Heart left ventricle (tissue), 16 donors: ENCODE measurements at regions of chr6 and their contacts with region 1.

Region 1: DNA sequence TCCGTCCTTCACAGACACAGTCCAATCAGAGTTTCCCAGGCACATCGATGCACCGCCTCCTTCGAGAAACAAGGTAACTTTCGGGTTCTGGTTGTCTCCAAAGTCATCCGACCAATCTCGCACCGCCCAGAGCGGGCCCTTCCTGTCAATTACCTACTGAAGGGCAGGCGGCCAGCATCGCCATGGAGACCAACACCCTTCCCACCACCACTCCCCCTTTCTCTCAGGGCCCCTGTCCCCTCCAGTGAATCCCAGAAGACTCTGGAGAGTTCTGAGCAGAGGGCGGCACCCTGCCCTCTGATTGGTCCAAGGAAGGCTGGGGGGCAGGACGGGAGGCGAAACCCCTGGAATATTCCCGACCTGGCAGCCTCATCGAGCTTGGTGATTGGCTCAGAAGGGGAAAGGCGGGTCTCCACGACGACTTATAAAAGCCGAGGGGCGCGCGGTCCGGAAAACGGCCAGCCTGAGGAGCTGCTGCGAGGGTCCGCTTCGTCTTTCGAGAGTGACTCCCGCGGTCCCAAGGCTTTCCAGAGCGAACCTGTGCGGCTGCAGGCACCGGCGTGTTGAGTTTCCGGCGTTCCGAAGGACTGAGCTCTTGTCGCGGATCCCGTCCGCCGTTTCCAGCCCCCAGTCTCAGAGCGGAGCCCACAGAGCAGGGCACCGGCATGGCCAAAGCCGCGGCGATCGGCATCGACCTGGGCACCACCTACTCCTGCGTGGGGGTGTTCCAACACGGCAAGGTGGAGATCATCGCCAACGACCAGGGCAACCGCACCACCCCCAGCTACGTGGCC is at the start of gene HSPA1B:
- DNase-seq: peak; percentile 98 to 100 (median 99)
- ATAC-seq: peak; percentile 94 to 97 (median 96)
- H3K4me3 ChIP-seq: peak within 1 kb of the TSS; percentile 41 to 82 (median 73)
- H3K27ac ChIP-seq: peak within 1 kb of the TSS; percentile 89 to 98 (median 96)
- H3K4me1 ChIP-seq: peaks cover 0 to 52% (median 30%) of the 10 kb centered on the region in 12 donors
- H3K27me3 ChIP-seq: no peaks in the 10 kb centered on the region
- CTCF ChIP-seq: no peak
- POLR2A ChIP-seq: peak; percentile 100
- total RNA-seq, gene HSPA1B: 120 to 306 (median 146) TPM

Region 2: DNA sequence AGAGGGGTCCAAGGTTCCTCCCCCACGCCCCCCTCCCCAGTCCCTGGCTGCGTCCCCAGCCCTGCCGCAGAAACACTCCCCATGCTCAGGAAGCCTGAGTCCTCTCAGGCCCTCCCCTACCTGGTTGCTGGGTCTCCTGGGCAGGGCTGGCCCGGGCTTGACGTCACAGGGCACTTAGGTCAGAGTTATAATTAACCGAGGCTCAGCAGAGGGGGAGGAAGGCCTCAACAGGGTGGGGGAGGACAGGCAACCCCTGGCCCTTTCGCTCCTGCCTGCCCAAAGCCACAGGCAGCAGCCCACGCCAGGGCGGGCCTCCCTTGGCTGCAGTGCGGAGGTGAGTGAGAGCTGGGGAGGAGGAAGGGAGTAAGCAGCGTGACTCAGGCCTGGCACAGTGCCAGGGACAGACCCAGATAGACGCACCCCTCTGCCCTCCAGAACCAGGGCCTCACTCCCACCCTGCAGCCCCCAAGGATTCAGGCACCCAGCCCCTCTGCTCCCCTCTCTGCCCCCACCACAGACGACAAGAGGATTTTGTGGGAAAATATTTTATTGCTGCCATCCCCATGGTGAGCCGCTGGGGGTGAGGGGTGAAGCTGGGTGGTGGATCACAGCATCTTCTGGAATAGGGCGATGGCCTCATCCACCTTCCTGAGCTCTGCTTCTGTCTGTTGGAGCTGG is 50.4 kb before region 1 on chr6 and contains the start of gene VWA7:
- intact Hi-C with region 1: loop called in 8 of 10 experiments (anchors 2 to 10 kb)
- DNase-seq: peak; percentile 73 to 90 (median 78)
- ATAC-seq: peak; percentile 85 to 93 (median 88)
- H3K4me3 ChIP-seq: peak within 1 kb of the TSS in 10 of 12 donors; percentile 13 to 49 (median 38)
- H3K27ac ChIP-seq: peak within 1 kb of the TSS in 11 of 12 donors; percentile 38 to 85 (median 79)
- H3K4me1 ChIP-seq: peaks cover 0 to 22% (median 13%) of the 10 kb centered on the region in 12 donors
- H3K27me3 ChIP-seq: no peaks in the 10 kb centered on the region
- CTCF ChIP-seq: no peak
- POLR2A ChIP-seq: peak in 1 of 2 donors; percentile 49
- total RNA-seq, gene VWA7: 8.0 to 25.8 (median 16.1) TPM

Region 3: DNA sequence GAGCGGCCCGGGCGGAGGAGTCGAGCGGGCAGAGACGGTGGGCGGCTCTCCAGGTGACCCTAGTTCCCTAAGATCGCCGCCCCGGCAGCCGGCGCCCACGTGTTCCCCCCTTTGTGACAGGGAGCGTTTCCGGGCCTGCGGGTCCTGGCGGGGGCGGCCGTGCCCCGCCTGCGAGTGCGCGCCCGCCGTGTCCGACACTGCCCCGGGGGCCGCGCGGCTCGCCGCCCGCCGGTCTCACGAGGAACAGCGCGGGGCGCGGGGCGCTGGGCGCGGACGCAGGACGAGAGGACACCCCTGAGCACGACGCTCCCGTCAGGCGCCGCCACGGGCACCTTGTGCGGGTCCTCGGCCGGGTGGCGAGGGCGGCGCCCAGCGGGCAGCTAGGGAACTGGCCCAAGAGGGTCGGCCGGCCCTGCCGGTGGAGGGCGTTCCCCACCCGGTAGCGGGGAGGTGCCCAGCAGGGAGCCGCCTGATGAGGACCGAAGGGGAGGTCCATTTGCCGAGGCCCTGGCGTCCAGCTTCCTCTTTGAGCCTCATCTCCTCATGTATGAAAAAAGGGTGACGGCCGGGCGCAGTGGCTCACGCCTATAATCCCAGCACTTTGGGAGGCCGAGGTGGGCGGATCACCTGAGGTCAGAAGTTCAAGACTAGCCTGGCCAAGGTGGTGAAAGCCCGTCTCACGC is 31.7 kb before region 1 on chr6 and contains the start of gene VARS1:
- intact Hi-C with region 1: loop called in 4 of 10 experiments (anchors 2 to 5 kb)
- DNase-seq: peak; percentile 92 to 98 (median 95)
- ATAC-seq: peak; percentile 81 to 97 (median 96)
- H3K4me3 ChIP-seq: peak within 1 kb of the TSS; percentile 67 to 98 (median 84)
- H3K27ac ChIP-seq: peak within 1 kb of the TSS; percentile 87 to 99 (median 96)
- H3K4me1 ChIP-seq: peaks cover 0 to 39% (median 18%) of the 10 kb centered on the region in 12 donors
- H3K27me3 ChIP-seq: no peaks in the 10 kb centered on the region
- CTCF ChIP-seq: peak; percentile 71 to 98 (median 85)
- POLR2A ChIP-seq: peak in 1 of 2 donors; percentile 59
- total RNA-seq, gene VARS1: 18.6 to 61.8 (median 26.1) TPM

Region 4: DNA sequence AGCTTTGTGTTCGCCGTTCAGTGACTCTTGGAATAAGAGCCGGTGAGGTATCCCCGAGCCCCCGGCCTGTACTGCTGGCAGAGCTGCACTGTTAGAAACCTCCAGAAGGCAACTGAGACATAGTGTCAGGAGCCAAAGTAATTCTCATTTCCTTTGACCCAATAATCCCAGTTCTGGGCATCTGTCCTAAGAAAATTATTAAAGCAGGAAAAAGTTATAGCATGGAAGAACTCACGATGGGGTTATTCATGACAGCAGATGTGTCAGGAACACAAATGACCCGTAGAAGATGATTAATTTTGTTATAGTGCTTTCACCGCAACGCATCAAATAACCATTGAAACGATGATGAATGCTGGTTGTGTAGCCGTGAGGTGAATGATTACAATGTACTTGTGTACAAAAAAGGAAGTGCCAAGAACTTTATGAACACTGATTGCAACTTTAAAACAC is 231.1 kb after region 1 on chr6:
- intact Hi-C with region 1: no loop called
- DNase-seq: peak in 1 of 5 donors; percentile 21
- ATAC-seq: peak in 3 of 4 donors; percentile 19 to 66 (median 24)
- H3K4me3 ChIP-seq: no peak overlapping the region
- H3K27ac ChIP-seq: peak overlapping the region in 4 of 12 donors; percentile 18 to 61 (median 31)
- H3K4me1 ChIP-seq: peaks cover 0 to 5% (median 0%) of the 10 kb centered on the region in 12 donors
- H3K27me3 ChIP-seq: no peaks in the 10 kb centered on the region
- CTCF ChIP-seq: no peak
- POLR2A ChIP-seq: no peak